OCI-LY7 (cell line): ENCODE measurements at regions of chr11 and their contacts with region 1.

Region 1: GRCh38 chr11:1652771-1653540 is 23.4 kb downstream of the KRTAP5-5 start:
- DNase-seq: peak; percentile 57
- H3K4me3 ChIP-seq: no peak overlapping the region
- H3K27ac ChIP-seq: no peak overlapping the region
- H3K4me1 ChIP-seq: no peaks in the 10 kb centered on the region
- CTCF ChIP-seq: peak; percentile 96

Region 2: GRCh38 chr11:1803246-1803645 is 150.3 kb after region 1 on chr11:
- CTCF ChIA-PET with region 1: no interaction called
- POLR2A ChIA-PET with region 1: no interaction called
- intact Hi-C with region 1: no loop called
- DNase-seq: no peak
- H3K4me3 ChIP-seq: no peak overlapping the region
- H3K27ac ChIP-seq: no peak overlapping the region
- H3K4me1 ChIP-seq: no peaks in the 10 kb centered on the region
- CTCF ChIP-seq: no peak

Region 3: GRCh38 chr11:1832211-1832919 is 179.4 kb after region 1 on chr11:
- CTCF ChIA-PET with region 1: interaction called, 3 read pairs
- POLR2A ChIA-PET with region 1: no interaction called
- intact Hi-C with region 1: loop called (anchors 1 kb)
- DNase-seq: peak; percentile 58
- H3K4me3 ChIP-seq: no peak overlapping the region
- H3K27ac ChIP-seq: no peak overlapping the region
- H3K4me1 ChIP-seq: no peaks in the 10 kb centered on the region
- CTCF ChIP-seq: peak; percentile 92

Region 4: GRCh38 chr11:2151500-2152257 is 498.7 kb after region 1 on chr11:
- CTCF ChIA-PET with region 1: no interaction called
- POLR2A ChIA-PET with region 1: no interaction called
- intact Hi-C with region 1: loop called (anchors 10 kb)
- DNase-seq: peak; percentile 80
- H3K4me3 ChIP-seq: no peak overlapping the region
- H3K27ac ChIP-seq: no peak overlapping the region
- H3K4me1 ChIP-seq: peaks cover 4% of the 10 kb centered on the region
- CTCF ChIP-seq: peak; percentile 76